Posterior cingulate gyrus (tissue), 11 donors: ENCODE measurements at regions of chr4 and their contacts with region 1.

Region 1: GRCh38 chr4:57168982-57169381 is 58.8 kb upstream of the IGFBP7 start:
- DNase-seq: no peak

Region 2: DNA sequence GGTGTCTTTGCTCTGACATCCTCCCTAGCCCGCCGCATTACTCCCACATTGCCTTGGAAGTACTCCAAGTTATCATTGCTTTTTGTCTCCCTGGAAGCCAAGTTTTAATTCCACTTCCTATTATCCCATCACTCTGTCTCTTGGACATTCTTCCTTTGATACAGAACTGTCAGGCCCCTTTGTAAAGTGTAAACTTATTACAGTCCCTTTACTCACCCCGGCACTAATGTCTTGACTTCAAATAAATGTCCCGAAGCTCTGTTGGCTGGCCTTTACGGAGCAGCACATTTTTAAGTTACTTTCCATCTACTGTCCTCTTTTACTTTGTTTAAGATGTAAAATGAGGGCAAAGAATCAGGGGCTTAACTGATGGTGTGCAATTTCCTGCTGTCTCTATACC is 164.7 kb after region 1 on chr4:
- intact Hi-C with region 1: no loop called
- DNase-seq: no peak

Region 3: DNA sequence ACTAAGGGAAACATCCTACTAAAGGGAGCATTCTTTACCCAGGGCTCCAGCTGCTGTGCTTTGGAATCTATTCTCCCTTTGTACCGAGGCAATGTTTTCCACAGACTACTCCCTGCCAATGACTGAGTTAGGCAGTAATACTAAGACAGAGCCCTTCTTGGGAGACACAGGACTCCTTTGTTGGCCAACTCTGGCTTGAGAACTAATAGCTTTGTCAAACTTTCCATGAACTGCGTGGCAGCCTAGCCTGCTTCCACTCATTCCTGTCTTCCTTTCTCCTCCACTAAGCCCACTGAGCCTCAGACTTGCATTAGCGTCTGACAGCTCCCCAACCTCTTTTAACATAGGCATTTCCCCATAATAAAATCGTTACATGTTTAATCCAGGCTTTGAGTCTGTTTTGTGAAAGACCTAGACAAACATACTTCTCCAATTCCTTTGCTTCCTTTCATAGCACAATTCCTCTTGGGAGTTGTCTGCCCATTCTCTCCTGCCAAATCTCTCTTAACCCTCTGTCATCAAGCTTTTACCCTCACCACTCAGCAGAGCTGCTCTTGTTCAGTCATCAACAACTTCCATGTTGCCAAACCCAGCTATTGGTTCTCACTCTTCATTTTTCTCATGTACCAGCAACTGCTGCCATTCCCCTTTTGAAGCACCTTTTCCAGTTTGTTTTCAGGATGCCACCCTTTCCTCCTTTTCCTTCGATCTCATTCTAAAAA is 241.5 kb after region 1 on chr4:
- intact Hi-C with region 1: loop called (anchors 5 kb)
- DNase-seq: peak in 6 of 10 donors; percentile 7 to 63 (median 30)